CD4-positive, alpha-beta memory T cell (primary cell): ENCODE measurements at regions of chr11 and their contacts with region 1.

Region 1: GRCh38 chr11:14727215-14727614 is 83.6 kb downstream of the PDE3B start:
- DNase-seq: no peak
- H3K4me3 ChIP-seq: no peak overlapping the region
- H3K4me3 Mint-ChIP-seq: peak overlapping the region in 2 of 8 donors; percentile 3 to 51
- H3K27ac ChIP-seq: no peak overlapping the region
- H3K27ac Mint-ChIP-seq: no peak overlapping the region
- H3K4me1 ChIP-seq: peaks cover 30% of the 10 kb centered on the region
- H3K4me1 Mint-ChIP-seq: peaks cover 43 to 68% (median 47%) of the 10 kb centered on the region in 4 donors
- H3K27me3 ChIP-seq: no peaks in the 10 kb centered on the region
- H3K27me3 Mint-ChIP-seq: no peaks in the 10 kb centered on the region

Region 2: GRCh38 chr11:14687943-14688627 is 39.1 kb before region 1 on chr11:
- CTCF ChIA-PET with region 1: no interaction called
- POLR2A ChIA-PET with region 1: no interaction called
- intact Hi-C with region 1: loop called (anchors 5 kb)
- DNase-seq: no peak
- H3K4me3 ChIP-seq: no peak overlapping the region
- H3K4me3 Mint-ChIP-seq: peak overlapping the region in 1 of 8 donors; percentile 63
- H3K27ac ChIP-seq: no peak overlapping the region
- H3K27ac Mint-ChIP-seq: peak overlapping the region; percentile 27 to 84 (median 58)
- H3K4me1 ChIP-seq: peaks cover 13% of the 10 kb centered on the region
- H3K4me1 Mint-ChIP-seq: peaks cover 29 to 58% (median 41%) of the 10 kb centered on the region in 4 donors
- H3K27me3 ChIP-seq: no peaks in the 10 kb centered on the region
- H3K27me3 Mint-ChIP-seq: no peaks in the 10 kb centered on the region